ENCODE measurements at regions of chr1 and their contacts with region 1.

Region 1: GRCh38 chr1:182604169-182605164 is at the start of gene RGS16:
- DNase-seq: peak; percentile 88
- ATAC-seq: peak; percentile 88
- H3K4me3 Mint-ChIP-seq: peak within 1 kb of the TSS; percentile 70
- H3K27ac Mint-ChIP-seq: peak within 1 kb of the TSS; percentile 47
- H3K4me1 Mint-ChIP-seq: peaks cover 28% of the 10 kb centered on the region
- H3K27me3 Mint-ChIP-seq: peaks cover 20% of the 10 kb centered on the region
- total RNA-seq, gene RGS16: 1.4 TPM

Region 2: GRCh38 chr1:182587666-182588499 is 16.6 kb before region 1 on chr1:
- POLR2A ChIA-PET with region 1: no interaction called
- DNase-seq: no peak
- ATAC-seq: no peak
- H3K4me3 Mint-ChIP-seq: peak overlapping the region; percentile 90
- H3K27ac Mint-ChIP-seq: peak overlapping the region; percentile 98
- H3K4me1 Mint-ChIP-seq: peaks cover 19% of the 10 kb centered on the region
- H3K27me3 Mint-ChIP-seq: peaks cover 6% of the 10 kb centered on the region

Region 3: DNA sequence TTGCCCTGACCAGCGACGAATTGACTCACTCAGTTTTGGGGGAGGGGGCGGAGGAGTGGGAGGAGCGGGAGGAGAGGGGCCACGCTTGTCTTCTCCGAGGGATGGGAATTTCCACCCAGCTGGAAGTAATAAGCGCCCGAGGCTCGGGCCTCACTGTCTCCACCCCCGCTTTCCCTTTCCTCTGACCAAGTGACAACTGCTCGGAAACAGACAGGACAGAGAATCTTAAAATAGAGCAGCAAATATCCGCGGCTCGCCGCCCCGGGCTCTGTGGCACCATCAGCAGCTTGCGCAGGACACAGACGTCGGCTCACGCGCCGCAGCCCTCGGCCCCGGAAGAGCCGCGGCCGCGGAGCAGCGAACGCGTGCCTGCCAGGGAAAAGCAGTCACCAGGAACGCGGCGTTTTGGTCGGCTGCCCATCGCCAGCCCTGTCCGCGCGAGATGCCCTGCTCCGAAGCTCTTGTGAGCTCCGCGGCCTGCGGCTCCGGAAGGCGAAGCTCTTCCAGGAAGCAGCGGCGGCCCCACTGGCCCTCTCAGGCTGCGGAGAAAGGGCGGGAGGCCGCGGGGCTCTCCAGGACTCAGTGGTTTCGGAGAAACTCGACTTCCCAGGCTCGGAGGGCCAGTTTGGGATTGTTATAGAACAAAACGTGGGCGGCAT is 10.5 kb after region 1 on chr1:
- POLR2A ChIA-PET with region 1: interaction called, 32 read pairs
- DNase-seq: peak; percentile 60
- ATAC-seq: peak; percentile 20
- H3K4me3 Mint-ChIP-seq: peak overlapping the region; percentile 59
- H3K27ac Mint-ChIP-seq: no peak overlapping the region
- H3K4me1 Mint-ChIP-seq: peaks cover 44% of the 10 kb centered on the region
- H3K27me3 Mint-ChIP-seq: peaks cover 74% of the 10 kb centered on the region

Region 4: DNA sequence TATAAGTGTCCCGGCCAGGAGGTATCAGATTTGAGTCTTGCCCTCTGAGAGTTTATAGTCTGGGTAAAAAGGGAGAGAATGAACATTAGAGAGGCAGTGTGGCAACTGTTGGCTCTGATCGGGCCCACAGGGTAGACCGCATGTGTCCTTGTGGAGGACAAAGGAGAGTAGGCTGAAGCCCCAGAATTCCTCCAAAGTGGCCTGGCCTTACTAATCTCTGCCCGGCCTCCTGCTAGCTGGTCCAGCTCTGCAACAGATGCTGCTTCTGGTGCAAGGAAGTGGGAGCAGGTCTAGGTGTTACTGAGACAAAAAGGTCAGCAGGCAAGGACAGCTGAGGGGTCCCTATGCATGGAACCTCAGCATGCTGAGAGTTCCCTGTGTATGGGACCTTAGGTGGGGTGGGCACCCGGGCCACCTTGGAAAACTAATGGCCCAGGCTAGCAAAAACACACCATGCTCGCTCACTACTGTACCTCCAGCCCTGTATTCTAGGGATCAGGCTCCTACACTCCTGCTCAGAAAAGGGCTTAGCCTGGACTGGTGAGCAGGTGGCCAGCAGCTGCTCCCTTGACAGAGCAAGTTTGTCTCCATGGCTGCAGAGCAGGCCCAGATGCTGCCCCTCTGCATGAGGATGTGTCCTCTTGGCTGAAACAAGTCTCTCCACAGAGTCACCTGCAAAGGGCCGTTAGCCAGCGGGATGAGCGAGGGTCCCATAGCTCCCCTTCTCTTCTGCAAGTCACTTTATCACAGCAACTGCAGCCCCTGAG is 30.0 kb after region 1 on chr1:
- POLR2A ChIA-PET with region 1: no interaction called
- DNase-seq: no peak
- ATAC-seq: no peak
- H3K4me3 Mint-ChIP-seq: no peak overlapping the region
- H3K27ac Mint-ChIP-seq: no peak overlapping the region
- H3K4me1 Mint-ChIP-seq: peaks cover 24% of the 10 kb centered on the region
- H3K27me3 Mint-ChIP-seq: peaks cover 49% of the 10 kb centered on the region

Measured in activated naive CD8-positive, alpha-beta T cell treated with anti-CD3 and anti-CD28 coated beads, Interleukin-2, amount 10 ng/mL, durations not matched to agents 7 days and 5 days (primary cell).